ENCODE measurements at regions of chr1 and their contacts with region 1.

Region 1: DNA sequence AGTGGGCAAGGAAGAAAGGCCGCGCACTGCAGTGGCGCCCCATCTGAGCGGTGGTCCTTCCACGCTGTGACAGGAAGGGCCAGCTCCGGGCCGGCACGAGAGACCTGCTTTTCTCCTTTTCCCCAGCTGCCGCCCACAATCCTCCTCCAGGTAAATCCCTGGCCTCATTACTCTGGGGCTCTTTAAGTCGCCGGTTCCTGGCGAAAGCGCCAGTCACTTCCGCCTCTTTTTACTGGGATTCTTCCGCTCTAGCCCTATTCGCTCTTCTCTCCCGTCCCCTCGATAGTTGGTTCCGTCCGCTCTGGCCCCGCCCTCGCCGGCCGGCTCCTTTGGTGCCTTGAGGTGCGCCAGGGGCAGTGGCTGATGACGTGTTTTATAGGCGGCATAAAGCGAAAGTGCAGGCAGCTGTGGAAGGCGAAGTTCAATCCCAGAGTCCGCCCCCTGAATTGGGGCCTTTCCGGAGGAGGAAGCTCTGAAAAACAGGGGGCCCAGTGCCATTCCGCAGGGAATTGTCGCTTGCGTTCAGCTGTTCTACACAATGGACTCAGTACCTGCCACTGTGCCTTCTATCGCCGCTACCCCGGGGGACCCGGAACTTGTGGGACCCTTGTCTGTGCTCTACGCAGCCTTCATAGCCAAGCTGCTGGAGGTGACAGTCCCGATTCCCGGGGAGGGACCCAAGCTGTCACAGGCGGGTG is 26.2 kb downstream of the MIA3 start:
- DNase-seq: peak; percentile 99
- H3K4me3 ChIP-seq: peak overlapping the region; percentile 70
- H3K27ac ChIP-seq: peak overlapping the region; percentile 91
- H3K4me1 ChIP-seq: peaks cover 8% of the 10 kb centered on the region
- H3K27me3 ChIP-seq: no peaks in the 10 kb centered on the region
- CTCF ChIP-seq: no peak

Region 2: DNA sequence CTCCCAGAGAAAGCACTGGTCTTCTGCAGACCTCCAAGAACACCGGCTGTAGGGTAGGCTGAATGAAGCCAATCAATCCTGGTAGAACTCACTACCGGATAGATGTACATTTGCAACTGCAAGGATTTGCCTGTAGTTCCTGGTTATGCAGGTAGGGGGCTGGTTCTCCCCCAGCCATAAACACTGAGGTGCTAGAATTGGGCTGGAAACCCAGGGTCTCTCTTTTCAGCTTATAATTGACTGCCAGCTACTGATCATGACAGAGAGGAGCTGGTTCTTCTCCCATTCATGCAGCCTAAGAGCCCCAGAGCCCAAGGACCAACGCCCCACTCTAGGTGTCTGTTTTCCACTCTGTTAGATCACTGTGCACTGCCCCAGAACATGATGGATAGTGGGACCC is 1917.5 kb before region 1 on chr1:
- CTCF ChIA-PET with region 1: no interaction called
- POLR2A ChIA-PET with region 1: no interaction called
- intact Hi-C with region 1: no loop called
- DNase-seq: no peak
- H3K4me3 ChIP-seq: no peak overlapping the region
- H3K27ac ChIP-seq: no peak overlapping the region
- H3K4me1 ChIP-seq: no peaks in the 10 kb centered on the region
- H3K27me3 ChIP-seq: no peaks in the 10 kb centered on the region
- CTCF ChIP-seq: peak; percentile 41

Region 3: GRCh38 chr1:222697826-222698225 is 53.7 kb after region 1 on chr1:
- CTCF ChIA-PET with region 1: no interaction called
- POLR2A ChIA-PET with region 1: no interaction called
- intact Hi-C with region 1: no loop called
- DNase-seq: no peak
- H3K4me3 ChIP-seq: no peak overlapping the region
- H3K27ac ChIP-seq: no peak overlapping the region
- H3K4me1 ChIP-seq: no peaks in the 10 kb centered on the region
- H3K27me3 ChIP-seq: no peaks in the 10 kb centered on the region
- CTCF ChIP-seq: no peak

Region 4: DNA sequence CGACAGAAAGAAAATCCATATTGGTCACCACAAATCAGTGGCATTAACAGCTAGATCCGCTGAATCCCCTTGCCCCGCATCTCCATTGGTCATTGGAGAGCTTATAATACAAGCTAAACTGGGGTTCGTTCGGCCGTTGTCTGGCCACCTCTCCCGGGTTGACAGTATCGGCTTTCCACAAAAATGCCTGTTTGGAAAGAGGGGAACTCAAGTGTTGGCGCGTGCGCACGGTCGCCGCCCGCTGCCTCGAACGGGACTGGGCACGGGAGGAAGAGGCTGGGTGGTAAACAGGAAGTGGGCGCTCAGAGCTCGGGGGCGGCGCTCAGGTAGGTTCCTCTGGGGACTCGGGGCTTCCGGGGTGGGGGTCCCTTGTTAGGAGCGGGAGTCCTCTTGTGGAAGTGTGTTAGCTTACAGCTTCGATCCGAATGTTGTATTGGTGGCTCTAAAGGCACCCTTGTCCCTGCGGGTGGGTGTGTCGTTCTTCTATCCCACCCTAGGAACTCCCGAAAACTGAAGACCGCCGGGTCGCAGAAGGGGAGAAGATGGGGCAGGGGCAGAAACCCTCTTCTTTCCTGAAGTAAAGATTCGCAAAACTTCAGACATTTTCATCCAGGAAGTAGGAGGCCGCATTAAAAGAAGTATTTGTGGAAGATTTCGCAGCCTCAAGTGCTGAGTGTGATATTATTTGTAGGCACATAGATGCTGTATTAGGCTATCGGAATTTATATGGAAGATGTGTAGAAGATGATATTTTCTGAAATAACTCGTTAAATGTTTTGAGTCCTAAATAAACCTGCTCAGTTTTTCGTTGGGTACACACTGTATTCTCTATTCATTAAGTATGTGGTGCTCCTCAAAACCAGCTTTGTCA is 69.2 kb after region 1 on chr1:
- CTCF ChIA-PET with region 1: no interaction called
- POLR2A ChIA-PET with region 1: no interaction called
- intact Hi-C with region 1: loop called (anchors 2 kb)
- DNase-seq: peak; percentile 98
- H3K4me3 ChIP-seq: peak overlapping the region; percentile 71
- H3K27ac ChIP-seq: peak overlapping the region; percentile 99
- H3K4me1 ChIP-seq: peaks cover 8% of the 10 kb centered on the region
- H3K27me3 ChIP-seq: no peaks in the 10 kb centered on the region
- CTCF ChIP-seq: no peak

Region 5: DNA sequence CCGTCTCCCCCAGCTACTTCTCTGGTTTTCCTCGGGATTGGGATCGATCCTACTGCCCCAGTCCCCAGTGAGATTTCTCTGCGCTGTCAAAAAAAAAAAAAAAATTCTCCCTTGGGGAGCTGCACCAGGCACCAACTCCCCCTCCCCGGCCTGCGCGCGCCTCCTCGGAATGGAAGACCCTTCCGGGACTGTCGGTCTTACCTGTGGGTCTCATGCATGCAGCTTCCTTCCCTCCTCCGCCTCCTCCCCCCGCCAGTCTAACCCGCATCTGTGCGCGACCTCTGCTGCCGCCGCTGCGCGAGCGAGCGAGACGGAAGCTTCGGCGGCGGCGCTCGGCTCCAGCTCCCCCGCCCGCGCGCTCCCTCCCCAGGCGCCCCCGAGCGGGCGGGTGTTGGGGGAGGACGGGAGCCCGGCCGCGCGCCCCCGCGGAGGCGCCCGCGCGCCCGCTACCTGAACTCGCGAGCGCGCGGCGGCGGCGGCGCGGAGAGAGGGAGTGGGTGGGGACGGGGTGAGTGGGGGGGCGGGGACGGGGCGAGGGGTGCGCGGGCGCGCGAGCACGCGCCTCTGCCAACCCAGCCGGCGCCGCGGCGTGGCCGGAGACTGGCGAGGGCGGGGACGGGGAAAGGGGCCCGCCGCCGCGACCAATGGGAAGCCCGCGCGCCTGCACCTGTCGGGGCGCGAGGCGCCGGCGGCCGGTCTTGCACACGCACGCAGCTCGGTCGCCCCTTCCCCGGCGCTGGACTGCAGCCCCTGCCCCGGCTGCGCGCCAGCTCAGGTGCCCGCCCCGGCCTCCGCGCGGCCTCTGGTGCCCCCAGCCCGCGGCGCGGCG is 720.0 kb after region 1 on chr1 and contains the start of gene SUSD4:
- CTCF ChIA-PET with region 1: no interaction called
- POLR2A ChIA-PET with region 1: interaction called, 10 read pairs
- intact Hi-C with region 1: no loop called
- DNase-seq: peak; percentile 52
- H3K4me3 ChIP-seq: peak within 1 kb of the TSS; percentile 48
- H3K27ac ChIP-seq: no peak within 1 kb of the TSS
- H3K4me1 ChIP-seq: peaks cover 15% of the 10 kb centered on the region
- H3K27me3 ChIP-seq: peaks cover 67% of the 10 kb centered on the region
- CTCF ChIP-seq: no peak
- total RNA-seq, gene SUSD4: not detected in 2 replicates